Right ventricle myocardium inferior (tissue), 1 donor: ENCODE measurements at regions of chr17 and their contacts with region 1.

Region 1: DNA sequence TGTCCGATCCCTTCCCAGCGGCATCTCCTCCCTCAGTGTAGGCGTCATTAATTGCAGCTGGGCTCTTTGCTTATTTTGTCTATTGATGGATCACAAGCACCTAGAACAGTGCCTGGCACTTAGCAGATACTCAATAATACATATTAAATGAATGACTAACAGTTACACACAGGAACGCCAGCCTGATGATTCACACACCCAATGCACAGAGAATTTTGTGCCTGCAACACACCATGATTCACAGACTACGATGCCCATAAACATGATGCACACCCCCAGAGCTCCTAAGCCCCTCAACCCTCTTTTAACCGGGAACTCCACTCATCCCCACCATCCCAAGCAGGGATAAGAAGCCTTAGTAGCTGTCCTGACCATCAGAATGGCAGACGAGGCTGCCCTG is 66.6 kb upstream of the TMEM97 start:
- DNase-seq: no peak
- ATAC-seq: no peak

Region 2: GRCh38 chr17:27805520-27806146 is 446.8 kb before region 1 on chr17:
- intact Hi-C with region 1: loop called (anchors 1 kb)
- DNase-seq: peak; percentile 85
- ATAC-seq: peak; percentile 89

Region 3: GRCh38 chr17:27892866-27893769 is 359.3 kb before region 1 on chr17 and contains the start of gene LYRM9:
- intact Hi-C with region 1: loop called (anchors 10 kb)
- DNase-seq: peak; percentile 96
- ATAC-seq: peak; percentile 100
- total RNA-seq, gene LYRM9: 6.7 TPM

Region 4: GRCh38 chr17:28041068-28041843 is 211.2 kb before region 1 on chr17:
- intact Hi-C with region 1: loop called (anchors 10 kb)
- DNase-seq: peak; percentile 100
- ATAC-seq: peak; percentile 99